ENCODE measurements at regions of chr1 and their contacts with region 1.

Region 1: GRCh38 chr1:16078925-16079656 is 5.6 kb upstream of the FAM131C start:
- DNase-seq: peak; percentile 84 to 85
- H3K4me3 ChIP-seq: no peak overlapping the region
- H3K27ac ChIP-seq: peak overlapping the region in 1 of 2 donors; percentile 36
- H3K4me1 ChIP-seq: peaks cover 0 to 4% of the 10 kb centered on the region in 2 donors
- H3K27me3 ChIP-seq: no peaks in the 10 kb centered on the region
- CTCF ChIP-seq: peak; percentile 88 to 99 (median 94)
- POLR2A ChIP-seq: peak in 1 of 2 donors; percentile 19

Region 2: GRCh38 chr1:16187748-16188401 is 108.8 kb after region 1 on chr1:
- intact Hi-C with region 1: loop called (anchors 2 kb)
- DNase-seq: peak; percentile 78 to 86
- H3K4me3 ChIP-seq: no peak overlapping the region
- H3K27ac ChIP-seq: peak overlapping the region; percentile 48 to 74
- H3K4me1 ChIP-seq: peaks cover 0 to 5% of the 10 kb centered on the region in 2 donors
- H3K27me3 ChIP-seq: no peaks in the 10 kb centered on the region
- CTCF ChIP-seq: peak; percentile 98 to 100 (median 99)
- POLR2A ChIP-seq: no peak

Region 3: DNA sequence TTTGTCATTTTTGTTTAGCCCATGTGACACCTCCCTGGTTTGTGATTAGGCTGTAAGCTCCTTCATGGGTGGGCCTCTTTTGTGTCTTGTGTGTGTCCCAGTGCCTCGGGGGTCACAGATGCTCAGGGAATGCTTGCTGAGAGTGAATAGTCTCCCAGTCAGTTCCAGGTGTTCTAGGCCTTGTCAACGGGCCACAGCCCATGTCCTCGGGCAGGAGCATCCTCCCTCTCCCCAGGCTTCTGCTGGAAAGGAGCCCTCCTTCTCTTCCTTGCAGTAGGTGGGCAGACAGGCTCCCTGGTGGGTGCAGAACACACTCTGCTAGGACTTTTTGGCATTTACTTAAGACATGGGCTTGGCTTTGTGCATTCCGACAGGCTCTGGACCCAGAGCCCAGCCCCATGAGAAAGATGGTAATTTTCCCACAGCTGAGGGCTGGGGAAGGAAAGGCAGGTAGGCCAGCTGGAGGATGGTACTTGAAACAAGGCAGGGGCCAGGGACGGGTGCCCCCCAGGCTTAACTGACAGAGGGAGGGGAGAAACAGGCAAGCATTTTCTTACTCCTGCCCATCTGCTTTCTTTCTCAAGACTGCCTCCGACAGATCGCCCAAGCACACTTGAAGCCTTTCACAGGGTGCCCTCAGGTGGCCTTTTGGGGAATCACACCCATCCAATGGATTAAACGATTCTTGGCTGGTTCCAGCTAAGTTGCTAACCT is 165.0 kb after region 1 on chr1:
- intact Hi-C with region 1: loop called (anchors 10 kb)
- DNase-seq: peak; percentile 83 to 90
- H3K4me3 ChIP-seq: no peak overlapping the region
- H3K27ac ChIP-seq: peak overlapping the region; percentile 90 to 95
- H3K4me1 ChIP-seq: peaks cover 17 to 20% of the 10 kb centered on the region in 2 donors
- H3K27me3 ChIP-seq: no peaks in the 10 kb centered on the region
- CTCF ChIP-seq: peak; percentile 84 to 93 (median 90)
- POLR2A ChIP-seq: peak in 1 of 2 donors; percentile 14

Region 4: DNA sequence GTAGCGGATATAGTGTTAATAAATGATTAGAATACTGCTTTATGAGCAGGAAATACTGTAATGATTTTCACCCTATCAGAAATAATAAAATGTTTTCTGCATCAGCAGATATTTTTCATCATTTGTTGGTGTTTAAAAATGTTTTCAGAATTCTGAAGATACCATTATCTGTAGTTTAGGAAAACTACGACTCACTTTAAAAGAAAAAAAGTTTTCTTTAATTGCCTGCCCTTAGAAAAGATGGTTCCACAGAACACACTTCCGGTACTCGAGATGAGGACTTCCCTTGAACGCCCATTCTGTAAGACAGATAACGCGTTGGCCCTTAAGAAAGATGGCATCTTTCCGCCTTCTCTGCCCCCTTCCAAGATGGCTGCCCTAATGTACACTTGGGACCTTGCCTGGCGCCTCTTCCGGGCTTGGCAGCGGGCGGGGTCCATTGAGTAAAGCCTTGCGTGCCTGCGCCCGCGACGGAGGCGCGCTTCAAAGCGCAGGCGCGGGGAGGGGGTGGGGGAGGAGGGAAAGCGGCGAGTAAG is 287.7 kb after region 1 on chr1 and contains the start of gene SZRD1:
- intact Hi-C with region 1: loop called (anchors 5 kb)
- DNase-seq: peak; percentile 97 to 98
- H3K4me3 ChIP-seq: peak within 1 kb of the TSS; percentile 61 to 93
- H3K27ac ChIP-seq: peak within 1 kb of the TSS; percentile 98 to 99
- H3K4me1 ChIP-seq: peaks cover 9 to 24% of the 10 kb centered on the region in 2 donors
- H3K27me3 ChIP-seq: no peaks in the 10 kb centered on the region
- CTCF ChIP-seq: peak in 1 of 4 experiments; percentile 24
- POLR2A ChIP-seq: no peak
- total RNA-seq, gene SZRD1: 24.4 to 126 (median 47.2) TPM